ENCODE measurements at regions of chr4 and their contacts with region 1.

Region 1: GRCh38 chr4:122602277-122603142 is 18.4 kb downstream of the IL21 start:
- DNase-seq: no peak
- H3K4me3 ChIP-seq: no peak overlapping the region
- H3K27ac ChIP-seq: no peak overlapping the region
- H3K4me1 ChIP-seq: peaks cover 0 to 8% (median 2%) of the 10 kb centered on the region in 4 donors
- H3K27me3 ChIP-seq: peaks cover 0 to 7% (median 0%) of the 10 kb centered on the region in 3 donors
- CTCF ChIP-seq: peak in 2 of 4 experiments; percentile 12 to 38
- EP300 ChIP-seq: no peak
- POLR2A ChIP-seq: no peak

Region 2: DNA sequence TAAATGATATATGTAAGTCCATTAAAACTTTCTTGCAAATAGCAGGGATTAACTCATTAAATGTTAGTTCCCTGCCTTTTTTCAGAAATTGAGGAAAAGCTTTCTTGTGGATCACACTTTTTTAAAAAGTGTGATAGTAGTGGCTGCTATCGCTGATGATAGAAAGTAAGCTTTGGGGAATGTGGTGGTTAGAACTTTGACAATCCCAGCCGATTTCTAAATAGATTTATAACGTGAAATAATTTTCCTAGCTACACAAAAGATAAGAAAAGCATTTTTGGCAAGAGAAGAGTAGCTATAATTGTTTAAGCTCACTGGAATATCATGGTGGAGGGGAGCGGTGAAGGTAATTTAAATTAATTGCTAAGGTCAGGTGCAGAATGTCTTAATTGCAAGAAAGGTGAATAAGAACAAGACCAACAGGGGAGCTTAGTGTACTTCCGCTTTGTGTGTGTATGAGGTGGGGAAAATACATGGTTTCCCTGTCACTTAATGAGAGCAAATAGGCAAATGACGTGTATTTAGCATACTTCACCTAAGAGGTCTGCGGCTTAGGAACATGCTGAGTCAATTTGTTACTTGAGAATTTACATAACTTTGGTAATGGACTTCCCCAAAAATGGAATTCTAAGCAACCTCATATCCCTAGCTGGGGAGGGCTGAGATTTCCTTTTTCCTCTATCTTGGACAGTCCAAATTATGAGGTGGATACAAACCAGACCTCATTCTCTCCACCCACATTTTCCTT is 30.1 kb after region 1 on chr4:
- intact Hi-C with region 1: no loop called
- DNase-seq: no peak
- H3K4me3 ChIP-seq: no peak overlapping the region
- H3K27ac ChIP-seq: no peak overlapping the region
- H3K4me1 ChIP-seq: no peaks in the 10 kb centered on the region
- H3K27me3 ChIP-seq: no peaks in the 10 kb centered on the region
- CTCF ChIP-seq: no peak
- EP300 ChIP-seq: no peak
- POLR2A ChIP-seq: no peak

Region 3: DNA sequence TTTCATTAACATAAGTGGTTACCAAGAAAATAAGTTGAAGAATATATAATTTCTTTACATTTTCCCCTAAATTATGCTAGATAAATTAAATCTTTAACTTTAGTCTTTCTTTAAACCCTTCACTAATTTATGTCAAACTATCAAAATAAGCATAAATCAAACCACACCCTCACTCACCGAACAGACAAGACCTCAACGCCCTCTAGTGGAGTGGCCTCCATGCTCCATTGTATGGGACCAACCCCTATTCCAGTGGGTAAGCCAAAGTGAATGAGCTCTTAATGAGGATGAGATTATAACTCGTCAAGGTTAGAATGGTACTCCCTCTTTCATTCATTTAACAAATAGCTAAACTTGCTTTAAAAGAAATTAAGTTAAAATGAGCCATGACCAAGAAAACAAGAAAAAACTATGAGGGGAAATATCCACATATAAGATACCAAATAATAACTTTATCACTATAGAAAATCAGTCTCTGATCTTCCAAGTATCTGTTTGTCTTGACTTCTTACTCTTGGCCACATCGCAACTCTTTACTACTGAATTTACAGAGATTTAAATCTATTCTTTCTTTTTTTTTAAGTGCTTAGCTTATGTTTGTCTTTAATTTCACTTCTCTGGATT is 114.4 kb after region 1 on chr4:
- intact Hi-C with region 1: loop called (anchors 5 kb)
- DNase-seq: peak; percentile 72
- H3K4me3 ChIP-seq: no peak overlapping the region
- H3K27ac ChIP-seq: no peak overlapping the region
- H3K4me1 ChIP-seq: no peaks in the 10 kb centered on the region
- H3K27me3 ChIP-seq: no peaks in the 10 kb centered on the region
- CTCF ChIP-seq: peak; percentile 42 to 77 (median 60)
- EP300 ChIP-seq: no peak
- POLR2A ChIP-seq: no peak

Region 4: GRCh38 chr4:122930862-122931261 is 328.4 kb after region 1 on chr4:
- intact Hi-C with region 1: loop called (anchors 5 kb)
- DNase-seq: no peak
- H3K4me3 ChIP-seq: no peak overlapping the region
- H3K27ac ChIP-seq: no peak overlapping the region
- H3K4me1 ChIP-seq: no peaks in the 10 kb centered on the region
- H3K27me3 ChIP-seq: no peaks in the 10 kb centered on the region
- CTCF ChIP-seq: peak in 3 of 4 experiments; percentile 29 to 64 (median 33)
- EP300 ChIP-seq: no peak
- POLR2A ChIP-seq: no peak

Measured in sigmoid colon (tissue), 7 donors.